ENCODE measurements at regions of chr3 and their contacts with region 1.

Region 1: DNA sequence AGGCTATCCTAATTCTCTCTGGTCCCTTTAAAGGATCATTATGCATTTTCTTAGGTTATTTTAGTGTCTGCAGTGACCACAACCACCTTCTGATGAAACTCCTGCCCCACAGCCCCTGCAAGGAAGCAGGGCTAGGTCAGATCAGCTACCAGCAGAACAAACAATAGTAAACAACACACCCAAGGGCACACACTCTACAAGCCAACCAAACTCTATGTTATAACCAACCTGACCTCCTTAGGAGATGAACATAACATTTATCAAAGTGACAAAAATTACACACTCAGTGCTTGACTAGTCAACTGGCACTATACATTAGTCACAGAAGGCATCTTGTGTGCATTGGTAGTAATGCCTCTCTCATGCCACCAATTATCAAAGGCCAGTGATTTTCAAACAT is 17.3 kb downstream of the DENND6A start:
- DNase-seq: no peak
- H3K4me3 ChIP-seq: no peak overlapping the region
- H3K27ac ChIP-seq: no peak overlapping the region
- H3K4me1 ChIP-seq: no peaks in the 10 kb centered on the region
- H3K27me3 ChIP-seq: no peaks in the 10 kb centered on the region
- CTCF ChIP-seq: no peak

Region 2: GRCh38 chr3:57890874-57891273 is 215.3 kb after region 1 on chr3:
- CTCF ChIA-PET with region 1: no interaction called
- POLR2A ChIA-PET with region 1: interaction called, 22 read pairs
- intact Hi-C with region 1: no loop called
- DNase-seq: no peak
- H3K4me3 ChIP-seq: no peak overlapping the region
- H3K27ac ChIP-seq: no peak overlapping the region
- H3K4me1 ChIP-seq: no peaks in the 10 kb centered on the region
- H3K27me3 ChIP-seq: no peaks in the 10 kb centered on the region
- CTCF ChIP-seq: no peak

Measured in PC-9 (cell line).